HCT116 (cell line): ENCODE measurements at regions of chr4 and their contacts with region 1.

Region 1: DNA sequence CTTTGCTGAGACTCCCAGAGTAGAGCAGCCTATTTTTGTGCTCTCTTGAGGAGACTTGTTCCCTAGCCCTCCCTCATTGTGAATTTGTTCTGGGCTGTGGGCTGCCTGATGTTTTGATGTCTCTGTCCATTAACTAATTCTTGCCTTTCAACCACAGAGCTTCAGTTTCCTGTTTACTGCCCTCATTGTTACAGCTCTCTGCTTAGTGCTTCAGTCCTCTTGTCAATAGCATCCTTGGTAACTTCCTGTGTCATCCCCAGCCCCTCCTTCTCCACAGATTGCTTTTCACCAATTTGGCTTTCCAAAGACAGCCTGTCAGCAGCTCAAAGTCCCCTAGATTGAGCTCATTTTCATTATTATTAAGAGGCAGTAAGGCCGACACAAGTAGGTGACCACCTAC is 69.9 kb downstream of the COX7B2 start:
- DNase-seq: no peak
- ATAC-seq: no peak
- H3K4me3 ChIP-seq: no peak overlapping the region
- H3K27ac ChIP-seq: no peak overlapping the region
- H3K4me1 ChIP-seq: no peaks in the 10 kb centered on the region
- H3K27me3 ChIP-seq: no peaks in the 10 kb centered on the region
- CTCF ChIP-seq: no peak
- POLR2A ChIP-seq: no peak
- RAD21 ChIP-seq: no peak

Region 2: GRCh38 chr4:46894826-46895225 is 55.7 kb after region 1 on chr4:
- CTCF ChIA-PET with region 1: no interaction called
- POLR2A ChIA-PET with region 1: no interaction called
- RAD21 ChIA-PET with region 1: no interaction called
- intact Hi-C with region 1: loop called (anchors 10 kb)
- DNase-seq: no peak
- ATAC-seq: no peak
- H3K4me3 ChIP-seq: no peak overlapping the region
- H3K27ac ChIP-seq: no peak overlapping the region
- H3K4me1 ChIP-seq: no peaks in the 10 kb centered on the region
- H3K27me3 ChIP-seq: no peaks in the 10 kb centered on the region
- CTCF ChIP-seq: no peak
- POLR2A ChIP-seq: no peak
- RAD21 ChIP-seq: no peak